Activated naive CD4-positive, alpha-beta T cell treated with anti-CD3 and anti-CD28 coated beads for 36 hours (primary cell): ENCODE measurements at regions of chr3 and their contacts with region 1.

Region 1: DNA sequence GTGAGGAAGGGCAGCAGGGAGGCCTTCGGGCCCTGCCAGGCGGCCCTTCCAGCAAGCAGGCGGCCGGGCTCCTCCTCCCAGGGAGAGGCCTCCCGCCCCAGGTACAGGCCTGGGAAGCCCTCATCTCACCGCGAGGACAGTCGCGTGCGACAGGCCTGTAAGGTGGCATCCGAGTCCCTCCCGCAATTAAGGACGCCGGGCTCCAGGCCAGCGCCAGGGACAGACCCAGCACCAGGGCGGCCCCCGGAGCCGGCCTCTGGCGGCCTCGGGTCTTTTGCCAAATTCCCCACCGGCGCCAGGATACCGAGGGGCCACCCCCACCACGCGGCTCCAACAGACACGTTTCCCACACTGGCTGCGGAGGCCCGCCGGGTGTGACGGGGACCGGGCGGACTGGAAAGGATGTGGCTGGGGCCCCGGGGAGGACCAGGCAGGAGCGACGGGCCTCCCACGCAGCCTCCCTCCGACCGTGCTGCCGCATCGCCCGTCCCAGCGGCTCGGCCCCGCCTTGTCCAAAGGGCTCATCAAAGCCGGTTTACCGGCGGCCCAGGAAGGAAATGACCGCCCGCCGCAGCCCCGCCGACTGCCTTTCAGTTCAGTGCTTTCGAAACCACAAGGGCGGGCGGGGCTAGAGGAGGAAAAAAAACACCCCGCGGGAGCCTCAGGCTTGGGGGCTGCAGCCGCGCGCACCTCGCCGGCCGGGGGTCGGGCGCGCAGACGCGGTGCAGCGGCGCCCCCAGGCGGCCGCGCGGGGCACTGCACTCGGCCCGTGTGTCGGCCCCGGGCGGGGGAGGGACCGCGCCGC is 11.3 kb downstream of the XXYLT1 start:
- DNase-seq: peak; percentile 79
- H3K4me3 Mint-ChIP-seq: peak overlapping the region; percentile 55
- H3K27ac Mint-ChIP-seq: no peak overlapping the region
- H3K4me1 Mint-ChIP-seq: peaks cover 13% of the 10 kb centered on the region
- H3K27me3 Mint-ChIP-seq: no peaks in the 10 kb centered on the region

Region 2: DNA sequence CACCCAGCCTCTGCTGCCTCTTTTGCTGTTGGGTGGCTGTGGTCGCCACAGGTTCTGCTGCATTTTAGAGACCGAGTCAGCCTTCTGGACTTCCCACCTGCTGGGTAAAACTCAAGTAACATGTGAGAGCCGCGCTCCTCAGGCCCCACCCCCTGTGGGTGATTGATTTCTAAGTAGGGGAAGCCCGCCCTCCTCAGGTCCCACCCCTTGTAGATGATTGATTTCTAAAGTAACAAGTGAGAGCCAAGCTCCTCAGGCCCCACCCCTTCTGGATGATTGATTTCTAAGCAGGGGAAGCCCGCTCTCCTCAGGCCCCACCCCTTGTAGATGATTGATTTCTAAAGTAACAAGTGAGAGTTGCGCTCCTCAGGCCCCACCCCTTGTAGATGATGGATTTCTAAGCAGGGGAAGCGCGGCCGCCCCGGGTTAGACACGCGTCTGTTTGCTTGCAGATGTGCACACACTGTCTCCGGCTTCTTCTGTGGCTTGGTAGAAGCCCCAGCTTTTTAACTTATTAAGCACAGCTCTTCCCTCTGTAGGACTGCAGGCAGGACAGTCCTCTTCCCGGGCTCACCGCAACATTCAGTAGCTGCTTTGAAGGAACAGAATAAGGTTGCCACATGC is 490.5 kb before region 1 on chr3:
- CTCF ChIA-PET with region 1: no interaction called
- intact Hi-C with region 1: loop called (anchors 1 kb)
- DNase-seq: peak; percentile 99
- H3K4me3 Mint-ChIP-seq: peak overlapping the region; percentile 70
- H3K27ac Mint-ChIP-seq: peak overlapping the region; percentile 66
- H3K4me1 Mint-ChIP-seq: peaks cover 11% of the 10 kb centered on the region
- H3K27me3 Mint-ChIP-seq: no peaks in the 10 kb centered on the region

Region 3: DNA sequence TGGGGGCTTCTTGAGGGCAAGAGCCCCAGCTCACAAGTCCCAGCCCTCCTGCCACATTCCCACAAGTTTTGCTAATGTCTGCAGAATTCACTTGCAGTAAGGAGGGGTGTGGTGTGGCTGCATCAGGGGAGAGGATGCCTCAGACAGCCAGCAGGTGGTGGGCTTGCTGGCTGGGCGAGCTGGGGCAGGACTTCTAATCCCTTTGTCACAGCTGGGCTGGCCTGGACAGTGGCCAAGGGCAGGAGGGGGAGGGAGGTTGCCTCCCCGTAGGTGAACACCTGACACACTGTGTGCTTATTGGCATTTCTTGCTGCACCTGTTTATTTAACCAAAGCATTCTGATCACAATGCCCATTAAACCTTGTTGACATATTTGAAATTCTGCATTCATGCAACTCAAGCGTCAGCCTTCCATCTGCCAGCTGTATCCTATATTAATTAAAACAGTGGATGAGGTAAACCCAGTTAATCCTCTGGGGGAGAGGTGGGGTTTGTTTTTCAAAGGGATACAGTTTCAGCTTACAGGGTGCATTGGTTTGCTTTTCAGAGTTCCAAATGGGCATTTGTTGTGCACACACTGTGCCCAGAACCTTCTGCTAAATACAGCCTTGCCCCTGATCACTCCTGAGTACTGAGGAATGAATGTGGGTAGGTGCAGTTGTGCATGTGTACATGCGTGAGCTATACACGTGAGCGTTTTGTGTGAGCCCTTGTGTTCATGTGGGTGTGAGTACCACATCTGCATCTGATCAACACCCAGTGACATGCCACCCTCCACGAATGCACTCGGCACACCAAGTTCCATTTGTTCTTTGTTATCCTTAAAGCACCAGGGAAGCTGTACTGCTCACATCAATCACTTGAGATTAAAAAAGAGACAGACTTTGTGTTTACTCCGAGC is 257.5 kb before region 1 on chr3:
- CTCF ChIA-PET with region 1: interaction called, 3 read pairs
- intact Hi-C with region 1: loop called (anchors 10 kb)
- DNase-seq: peak; percentile 29
- H3K4me3 Mint-ChIP-seq: no peak overlapping the region
- H3K27ac Mint-ChIP-seq: no peak overlapping the region
- H3K4me1 Mint-ChIP-seq: no peaks in the 10 kb centered on the region
- H3K27me3 Mint-ChIP-seq: no peaks in the 10 kb centered on the region

Region 4: GRCh38 chr3:195129644-195130492 is 129.8 kb before region 1 on chr3:
- CTCF ChIA-PET with region 1: no interaction called
- intact Hi-C with region 1: loop called (anchors 5 kb)
- DNase-seq: peak; percentile 49
- H3K4me3 Mint-ChIP-seq: no peak overlapping the region
- H3K27ac Mint-ChIP-seq: no peak overlapping the region
- H3K4me1 Mint-ChIP-seq: peaks cover 23% of the 10 kb centered on the region
- H3K27me3 Mint-ChIP-seq: no peaks in the 10 kb centered on the region

Region 5: GRCh38 chr3:195221015-195221853 is 38.4 kb before region 1 on chr3:
- CTCF ChIA-PET with region 1: no interaction called
- intact Hi-C with region 1: no loop called
- DNase-seq: no peak
- H3K4me3 Mint-ChIP-seq: no peak overlapping the region
- H3K27ac Mint-ChIP-seq: no peak overlapping the region
- H3K4me1 Mint-ChIP-seq: no peaks in the 10 kb centered on the region
- H3K27me3 Mint-ChIP-seq: no peaks in the 10 kb centered on the region